Left cardiac atrium (tissue), 4 donors: ENCODE measurements at regions of chr1 and their contacts with region 1.

Region 1: DNA sequence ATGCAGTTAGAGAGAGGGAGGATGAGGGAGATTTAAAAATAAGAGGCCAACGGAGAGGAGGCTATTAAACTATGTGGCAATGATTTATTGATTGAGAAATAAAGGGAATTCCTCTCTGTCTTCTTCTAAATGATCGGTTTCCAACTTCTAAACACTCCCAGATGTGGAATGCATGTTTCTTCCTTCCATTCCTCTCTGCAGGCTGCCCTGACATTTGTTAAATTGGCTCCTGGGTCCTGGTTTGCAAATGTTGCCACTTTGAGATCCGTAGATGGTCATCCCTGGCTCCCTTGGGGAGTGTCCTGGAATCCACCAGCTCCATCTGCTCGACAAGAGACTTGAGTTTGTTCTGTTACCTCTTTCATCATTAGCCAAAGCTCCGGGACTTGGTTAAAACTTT is 10.3 kb upstream of the C1orf198 start:
- DNase-seq: no peak
- ATAC-seq: peak in 1 of 2 donors; percentile 16

Region 2: DNA sequence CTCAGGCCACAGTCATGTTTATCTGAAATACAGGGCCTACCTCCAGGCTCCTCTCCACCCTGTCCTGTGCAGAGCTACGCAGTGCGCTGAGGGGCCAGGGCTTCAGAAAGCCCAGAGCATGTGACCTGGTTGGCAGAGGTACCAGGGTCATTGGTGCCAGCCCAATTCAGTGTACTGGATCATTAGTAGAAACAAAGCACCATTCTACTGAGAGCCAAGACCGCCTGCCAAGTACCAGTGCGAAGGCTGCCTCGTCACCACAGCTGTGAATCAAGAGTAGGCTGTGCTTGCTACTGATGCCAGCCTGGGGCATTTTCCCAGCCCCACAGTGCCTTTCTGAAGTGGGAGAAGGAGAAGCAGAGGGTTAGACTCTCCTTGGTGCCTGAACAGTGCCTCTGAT is 71.6 kb before region 1 on chr1:
- intact Hi-C with region 1: loop called in 1 of 2 experiments (anchors 10 kb)
- DNase-seq: peak; percentile 74
- ATAC-seq: peak; percentile 92 to 93

Region 3: GRCh38 chr1:230940848-230941247 is 62.3 kb after region 1 on chr1:
- intact Hi-C with region 1: no loop called
- DNase-seq: no peak
- ATAC-seq: no peak